Spleen (tissue), 13 donors: ENCODE measurements at regions of chr3 and their contacts with region 1.

Region 1: GRCh38 chr3:27712136-27713077 is 9.7 kb downstream of the EOMES start:
- DNase-seq: peak; percentile 93
- H3K4me3 ChIP-seq: peak overlapping the region; percentile 43 to 72 (median 54)
- H3K27ac ChIP-seq: peak overlapping the region in 7 of 8 donors; percentile 58 to 81 (median 70)
- H3K4me1 ChIP-seq: peaks cover 12 to 47% (median 30%) of the 10 kb centered on the region in 6 donors
- H3K27me3 ChIP-seq: peaks cover 0 to 72% (median 50%) of the 10 kb centered on the region in 7 donors
- CTCF ChIP-seq: peak; percentile 39 to 85 (median 77)
- POLR2A ChIP-seq: no peak

Region 2: GRCh38 chr3:27910456-27910855 is 198.0 kb after region 1 on chr3:
- intact Hi-C with region 1: no loop called
- DNase-seq: no peak
- H3K4me3 ChIP-seq: no peak overlapping the region
- H3K27ac ChIP-seq: no peak overlapping the region
- H3K4me1 ChIP-seq: peaks cover 0 to 7% (median 0%) of the 10 kb centered on the region in 6 donors
- H3K27me3 ChIP-seq: no peaks in the 10 kb centered on the region
- CTCF ChIP-seq: no peak
- POLR2A ChIP-seq: no peak

Region 3: DNA sequence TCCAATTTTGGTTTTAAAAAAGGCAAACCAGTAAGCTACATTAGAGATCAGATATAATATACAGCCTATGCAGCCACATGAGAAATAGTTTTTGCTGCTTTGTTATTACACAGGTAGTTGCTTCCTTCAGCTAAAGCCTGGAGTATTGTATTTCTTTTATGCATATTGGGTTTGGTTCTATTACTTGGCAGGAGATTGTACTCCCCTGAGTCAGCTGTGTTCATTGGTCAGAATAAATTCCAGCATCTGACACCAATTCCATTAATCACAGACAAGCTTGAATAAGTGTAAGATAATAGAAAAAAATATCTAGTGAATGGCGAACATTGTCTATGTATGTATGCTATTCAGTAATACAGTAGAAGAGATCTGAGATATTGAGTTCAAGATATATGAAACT is 610.1 kb after region 1 on chr3:
- intact Hi-C with region 1: loop called (anchors 5 kb)
- DNase-seq: no peak
- H3K4me3 ChIP-seq: no peak overlapping the region
- H3K27ac ChIP-seq: no peak overlapping the region
- H3K4me1 ChIP-seq: peaks cover 0 to 50% (median 2%) of the 10 kb centered on the region in 6 donors
- H3K27me3 ChIP-seq: no peaks in the 10 kb centered on the region
- CTCF ChIP-seq: no peak
- POLR2A ChIP-seq: no peak

Region 4: GRCh38 chr3:28334552-28334951 is 622.1 kb after region 1 on chr3:
- intact Hi-C with region 1: loop called (anchors 5 kb)
- DNase-seq: no peak
- H3K4me3 ChIP-seq: no peak overlapping the region
- H3K27ac ChIP-seq: no peak overlapping the region
- H3K4me1 ChIP-seq: peaks cover 0 to 3% (median 0%) of the 10 kb centered on the region in 6 donors
- H3K27me3 ChIP-seq: no peaks in the 10 kb centered on the region
- CTCF ChIP-seq: peak in 1 of 11 experiments; percentile 8
- POLR2A ChIP-seq: no peak